ENCODE measurements at regions of chr2 and their contacts with region 1.

Region 1: GRCh38 chr2:35530615-35531135 is 824.9 kb upstream of the CRIM1 start:
- DNase-seq: no peak
- H3K4me3 ChIP-seq: no peak overlapping the region
- H3K4me3 Mint-ChIP-seq: no peak overlapping the region
- H3K27ac ChIP-seq: no peak overlapping the region
- H3K27ac Mint-ChIP-seq: no peak overlapping the region
- H3K4me1 ChIP-seq: no peaks in the 10 kb centered on the region
- H3K4me1 Mint-ChIP-seq: no peaks in the 10 kb centered on the region
- H3K27me3 ChIP-seq: no peaks in the 10 kb centered on the region
- H3K27me3 Mint-ChIP-seq: no peaks in the 10 kb centered on the region

Region 2: DNA sequence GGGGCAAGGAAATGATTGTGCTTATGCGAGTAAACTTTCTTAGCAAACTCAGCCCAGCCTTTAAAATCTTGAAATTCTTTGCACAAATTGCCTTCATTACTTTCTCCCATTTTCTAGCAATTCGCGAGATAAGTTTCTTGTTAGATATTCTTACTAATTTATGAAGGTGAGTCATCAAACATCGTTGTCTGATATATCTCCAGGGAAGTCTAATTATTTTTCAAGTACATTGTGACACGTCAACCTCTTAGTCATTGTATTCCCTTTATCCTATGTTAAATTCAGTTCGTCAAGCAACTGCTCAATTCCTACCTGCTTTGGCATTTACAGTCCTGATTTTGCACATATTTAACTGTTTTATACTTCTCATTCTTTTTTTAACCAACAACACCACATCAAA is 29.6 kb before region 1 on chr2:
- CTCF ChIA-PET with region 1: no interaction called
- POLR2A ChIA-PET with region 1: no interaction called
- intact Hi-C with region 1: loop called (anchors 1 kb)
- DNase-seq: no peak
- H3K4me3 ChIP-seq: no peak overlapping the region
- H3K4me3 Mint-ChIP-seq: no peak overlapping the region
- H3K27ac ChIP-seq: no peak overlapping the region
- H3K27ac Mint-ChIP-seq: no peak overlapping the region
- H3K4me1 ChIP-seq: no peaks in the 10 kb centered on the region
- H3K4me1 Mint-ChIP-seq: no peaks in the 10 kb centered on the region
- H3K27me3 ChIP-seq: no peaks in the 10 kb centered on the region
- H3K27me3 Mint-ChIP-seq: no peaks in the 10 kb centered on the region